Activated CD8-positive, alpha-beta memory T cell treated with anti-CD3 and anti-CD28 coated beads, Interleukin-2, amount 10 ng/mL, durations not matched to agents 7 days and 5 days (primary cell): ENCODE measurements at regions of chr10 and their contacts with region 1.

Region 1: DNA sequence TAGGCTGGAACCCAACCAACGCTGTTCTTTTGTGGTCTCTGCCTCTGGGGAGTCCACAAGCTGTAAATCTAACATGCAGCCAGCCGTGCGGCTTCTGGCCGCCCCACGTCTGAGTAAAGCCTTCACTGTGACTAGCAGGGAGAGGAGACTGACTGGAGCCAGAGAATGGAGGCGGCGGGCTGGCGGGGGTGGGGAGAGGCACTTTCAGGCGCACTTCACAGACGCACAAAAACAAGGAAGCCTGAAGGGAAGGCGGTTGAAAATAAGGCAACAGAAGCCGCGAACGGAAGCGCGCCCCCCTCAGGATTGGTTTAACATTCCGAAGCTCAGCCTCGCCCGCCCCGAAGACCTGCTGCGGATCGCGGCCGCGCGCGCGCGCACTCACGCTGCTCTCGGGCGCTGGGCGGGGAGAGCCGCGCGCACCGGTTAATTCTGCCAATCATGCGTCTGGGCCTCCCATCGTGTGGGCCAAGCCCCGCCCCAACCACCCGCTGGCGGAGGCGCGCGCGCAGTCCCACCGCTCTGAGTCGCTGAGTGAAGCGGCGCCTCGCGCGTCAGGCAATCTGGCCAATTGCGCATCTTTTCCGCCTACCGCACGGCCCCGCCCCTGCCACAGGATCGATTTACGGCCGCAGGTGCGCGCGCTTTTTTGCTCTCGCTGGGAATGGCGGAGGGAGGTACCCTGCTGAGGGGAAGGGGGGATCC is at the start of gene SFR1:
- DNase-seq: peak; percentile 99
- ATAC-seq: peak; percentile 96
- H3K4me3 Mint-ChIP-seq: peak within 1 kb of the TSS; percentile 82
- H3K27ac Mint-ChIP-seq: peak within 1 kb of the TSS; percentile 97
- H3K4me1 Mint-ChIP-seq: peaks cover 33% of the 10 kb centered on the region
- H3K27me3 Mint-ChIP-seq: peaks cover 7% of the 10 kb centered on the region
- total RNA-seq, gene SFR1: 14.9 to 17.4 TPM

Region 2: GRCh38 chr10:103918053-103918846 is 203.4 kb before region 1 on chr10 and contains the start of gene STN1:
- CTCF ChIA-PET with region 1: interaction called, 12 read pairs
- DNase-seq: peak; percentile 98
- ATAC-seq: peak; percentile 94
- H3K4me3 Mint-ChIP-seq: peak within 1 kb of the TSS; percentile 99
- H3K27ac Mint-ChIP-seq: peak within 1 kb of the TSS; percentile 96
- H3K4me1 Mint-ChIP-seq: peaks cover 31% of the 10 kb centered on the region
- H3K27me3 Mint-ChIP-seq: no peaks in the 10 kb centered on the region
- total RNA-seq, gene STN1: 37.5 to 52.0 TPM

Region 3: GRCh38 chr10:103966671-103967447 is 154.8 kb before region 1 on chr10 and contains the start of gene SLK:
- CTCF ChIA-PET with region 1: interaction called, 12 read pairs
- DNase-seq: peak; percentile 86
- ATAC-seq: peak; percentile 90
- H3K4me3 Mint-ChIP-seq: peak within 1 kb of the TSS; percentile 97
- H3K27ac Mint-ChIP-seq: peak within 1 kb of the TSS; percentile 92
- H3K4me1 Mint-ChIP-seq: peaks cover 33% of the 10 kb centered on the region
- H3K27me3 Mint-ChIP-seq: no peaks in the 10 kb centered on the region
- total RNA-seq, gene SLK: 31.2 to 32.6 TPM

Region 4: DNA sequence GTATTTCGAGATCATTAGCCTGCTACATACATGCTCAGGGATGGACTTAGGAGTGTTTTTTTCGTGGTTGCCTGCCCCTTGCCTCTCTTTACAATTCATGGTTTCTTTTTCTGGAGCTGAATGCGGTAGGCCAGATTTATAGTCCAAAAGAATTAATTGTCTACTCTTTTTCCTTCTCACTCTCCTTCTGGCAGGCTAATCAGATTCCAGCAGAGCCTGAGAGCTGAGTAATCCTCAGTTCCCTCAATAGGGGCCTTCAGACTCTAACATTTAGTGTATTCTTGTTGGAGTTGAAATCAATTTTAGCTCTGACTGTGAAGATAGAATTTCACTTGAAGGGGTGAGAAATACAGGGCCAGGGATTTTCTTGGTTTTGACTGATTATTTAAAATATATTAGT is 535.8 kb after region 1 on chr10:
- CTCF ChIA-PET with region 1: no interaction called
- DNase-seq: no peak
- ATAC-seq: no peak
- H3K4me3 Mint-ChIP-seq: no peak overlapping the region
- H3K27ac Mint-ChIP-seq: no peak overlapping the region
- H3K4me1 Mint-ChIP-seq: no peaks in the 10 kb centered on the region
- H3K27me3 Mint-ChIP-seq: peaks cover 7% of the 10 kb centered on the region